ENCODE measurements at regions of chr2 and their contacts with region 1.

Region 1: DNA sequence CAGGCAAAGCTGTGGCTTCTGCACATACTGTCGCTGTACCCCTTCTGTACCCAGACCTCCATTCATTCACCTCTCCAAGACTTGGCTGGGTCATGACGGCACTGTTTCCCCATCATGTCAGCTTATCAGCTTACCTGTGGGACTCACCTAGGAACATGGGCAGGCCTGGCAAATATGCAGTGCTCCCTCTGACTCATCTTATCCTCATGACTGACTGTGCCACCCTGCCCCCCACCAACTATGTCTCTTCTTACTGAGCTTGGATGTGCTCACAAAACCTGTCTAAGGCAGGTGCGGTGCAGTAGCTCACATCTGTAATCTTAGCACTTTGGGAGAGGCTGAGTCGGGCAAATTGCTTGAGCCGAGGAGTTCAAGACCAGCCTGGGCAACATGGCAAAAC is 152.4 kb downstream of the MGAT5 start:
- DNase-seq: peak; percentile 65 to 72
- H3K4me3 ChIP-seq: no peak overlapping the region
- H3K27ac ChIP-seq: no peak overlapping the region
- H3K4me1 ChIP-seq: peaks cover 13% of the 10 kb centered on the region
- H3K27me3 ChIP-seq: no peaks in the 10 kb centered on the region
- CTCF ChIP-seq: no peak

Region 2: GRCh38 chr2:134718817-134719814 is 312.8 kb after region 1 on chr2 and contains the start of gene TMEM163:
- CTCF ChIA-PET with region 1: no interaction called
- POLR2A ChIA-PET with region 1: interaction called, 11 read pairs
- intact Hi-C with region 1: no loop called
- DNase-seq: peak in 1 of 2 experiments; percentile 52
- H3K4me3 ChIP-seq: peak within 1 kb of the TSS; percentile 74
- H3K27ac ChIP-seq: no peak within 1 kb of the TSS
- H3K4me1 ChIP-seq: peaks cover 4% of the 10 kb centered on the region; the same call in 1 of the 2 replicates
- H3K27me3 ChIP-seq: peaks cover 9% of the 10 kb centered on the region
- CTCF ChIP-seq: no peak
- total RNA-seq, gene TMEM163: 1.4 and 2.4 TPM in 2 replicates

Region 3: GRCh38 chr2:135066710-135067109 is 660.4 kb after region 1 on chr2:
- CTCF ChIA-PET with region 1: no interaction called
- POLR2A ChIA-PET with region 1: interaction called, 12 read pairs
- intact Hi-C with region 1: no loop called
- DNase-seq: no peak
- H3K4me3 ChIP-seq: no peak overlapping the region
- H3K27ac ChIP-seq: no peak overlapping the region
- H3K4me1 ChIP-seq: no peaks in the 10 kb centered on the region
- H3K27me3 ChIP-seq: no peaks in the 10 kb centered on the region
- CTCF ChIP-seq: no peak

Region 4: DNA sequence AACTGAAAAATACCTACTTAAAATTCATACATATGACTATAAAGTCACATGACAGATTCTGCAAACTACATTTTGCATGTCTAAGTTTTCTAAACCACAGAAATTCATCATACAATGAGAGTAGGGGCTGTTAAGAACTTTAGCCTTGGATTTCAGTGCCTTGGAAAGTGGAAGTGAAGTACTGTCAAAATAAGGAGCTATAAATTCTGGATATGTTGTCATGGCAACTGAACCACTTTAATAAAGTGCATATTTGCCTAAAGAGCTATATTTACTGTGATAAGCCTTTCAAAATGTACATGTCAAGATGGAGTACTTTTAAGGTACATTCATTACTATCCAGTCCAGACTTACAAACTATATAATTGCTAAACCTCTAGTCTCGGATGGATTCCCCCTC is 872.9 kb after region 1 on chr2:
- CTCF ChIA-PET with region 1: no interaction called
- POLR2A ChIA-PET with region 1: no interaction called
- intact Hi-C with region 1: no loop called
- DNase-seq: no peak
- H3K4me3 ChIP-seq: no peak overlapping the region
- H3K27ac ChIP-seq: no peak overlapping the region
- H3K4me1 ChIP-seq: no peaks in the 10 kb centered on the region
- H3K27me3 ChIP-seq: no peaks in the 10 kb centered on the region
- CTCF ChIP-seq: no peak

Measured in PC-9 (cell line).